HCT116 (cell line): ENCODE measurements at regions of chr12 and their contacts with region 1.

Region 1: DNA sequence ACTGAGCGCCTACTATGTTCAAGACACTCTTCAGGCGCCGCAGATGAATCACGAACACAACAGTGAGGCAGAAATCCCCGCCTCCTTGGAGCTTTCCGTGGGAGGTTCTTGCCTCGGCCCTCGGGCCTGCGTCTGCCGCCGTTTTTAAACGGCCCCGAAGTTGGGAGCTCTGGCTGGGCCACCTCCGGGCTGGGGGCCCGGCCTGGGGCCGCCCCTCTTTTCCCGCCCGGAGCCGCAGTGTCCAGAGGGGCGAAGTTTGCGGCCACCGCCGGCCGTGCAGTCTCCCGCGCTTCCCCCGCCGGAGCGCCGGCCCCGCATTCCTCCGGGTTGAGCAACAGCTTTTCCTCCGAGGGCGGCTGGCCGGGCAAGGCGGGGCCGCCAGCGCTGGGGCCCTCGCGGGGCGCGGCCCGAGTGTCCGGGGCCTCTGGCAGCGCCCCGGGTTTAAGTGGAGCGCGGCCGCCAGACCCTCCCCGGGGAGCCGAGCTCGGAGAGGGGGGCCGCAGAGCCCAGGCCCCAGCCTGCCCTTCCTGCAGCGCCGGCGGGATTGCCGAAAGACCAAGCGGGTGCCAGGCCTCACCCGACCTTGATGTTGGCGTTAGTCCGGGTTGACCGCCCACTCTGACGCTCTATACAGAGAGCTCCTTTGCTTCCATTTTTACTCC is 18.7 kb upstream of the CTDSP2 start:
- DNase-seq: peak; percentile 32
- ATAC-seq: peak; percentile 85
- H3K4me3 ChIP-seq: peak overlapping the region; percentile 42 to 63
- H3K27ac ChIP-seq: peak overlapping the region; percentile 76
- H3K4me1 ChIP-seq: peaks cover 13 to 34% of the 10 kb centered on the region in 2 experiments
- H3K27me3 ChIP-seq: no peaks in the 10 kb centered on the region
- CTCF ChIP-seq: no peak
- POLR2A ChIP-seq: no peak
- RAD21 ChIP-seq: no peak

Region 2: GRCh38 chr12:56884421-56884820 is 980.8 kb before region 1 on chr12:
- CTCF ChIA-PET with region 1: no interaction called
- POLR2A ChIA-PET with region 1: no interaction called
- RAD21 ChIA-PET with region 1: no interaction called
- intact Hi-C with region 1: no loop called
- DNase-seq: no peak
- ATAC-seq: no peak
- H3K4me3 ChIP-seq: no peak overlapping the region
- H3K27ac ChIP-seq: no peak overlapping the region
- H3K4me1 ChIP-seq: no peaks in the 10 kb centered on the region
- H3K27me3 ChIP-seq: no peaks in the 10 kb centered on the region
- CTCF ChIP-seq: no peak
- POLR2A ChIP-seq: no peak
- RAD21 ChIP-seq: no peak

Region 3: GRCh38 chr12:57846577-57847319 is 18.5 kb before region 1 on chr12 and contains the start of gene CTDSP2:
- CTCF ChIA-PET with region 1: interaction called, 5 read pairs
- POLR2A ChIA-PET with region 1: interaction called, 20 read pairs
- RAD21 ChIA-PET with region 1: interaction called in 1 of 2 experiments, 3 read pairs
- intact Hi-C with region 1: loop called (anchors 2 kb)
- DNase-seq: peak; percentile 96
- ATAC-seq: peak; percentile 78
- H3K4me3 ChIP-seq: peak within 1 kb of the TSS; percentile 95 to 97
- H3K27ac ChIP-seq: peak within 1 kb of the TSS; percentile 91
- H3K4me1 ChIP-seq: peaks cover 22 to 43% of the 10 kb centered on the region in 2 experiments
- H3K27me3 ChIP-seq: no peaks in the 10 kb centered on the region
- CTCF ChIP-seq: no peak
- POLR2A ChIP-seq: peak; percentile 61
- RAD21 ChIP-seq: no peak
- total RNA-seq, gene CTDSP2: 82.7 TPM

Region 4: GRCh38 chr12:58074259-58074658 is 209.0 kb after region 1 on chr12:
- CTCF ChIA-PET with region 1: no interaction called
- POLR2A ChIA-PET with region 1: no interaction called
- RAD21 ChIA-PET with region 1: no interaction called
- intact Hi-C with region 1: no loop called
- DNase-seq: no peak
- ATAC-seq: no peak
- H3K4me3 ChIP-seq: no peak overlapping the region
- H3K27ac ChIP-seq: no peak overlapping the region
- H3K4me1 ChIP-seq: no peaks in the 10 kb centered on the region
- H3K27me3 ChIP-seq: no peaks in the 10 kb centered on the region
- CTCF ChIP-seq: no peak
- POLR2A ChIP-seq: no peak
- RAD21 ChIP-seq: no peak

Region 5: DNA sequence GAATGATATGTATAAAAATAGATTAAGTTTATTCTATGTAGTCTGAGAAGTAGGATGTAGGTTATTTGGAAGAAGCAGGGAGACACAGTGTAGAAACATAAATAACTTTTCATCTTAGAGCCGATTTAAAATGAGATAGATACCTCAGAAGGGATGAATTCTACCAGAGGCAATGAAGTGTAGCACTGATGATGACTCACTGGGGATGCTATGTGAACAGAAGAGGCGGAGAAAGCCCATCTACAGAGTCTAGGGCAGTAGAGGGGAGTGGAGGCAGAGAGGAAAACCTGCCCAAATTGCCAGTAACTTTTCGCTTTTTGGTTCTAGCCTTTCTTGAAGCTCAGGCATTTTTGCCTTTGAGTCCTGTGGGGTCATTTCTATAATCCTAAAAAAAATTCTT is 527.9 kb after region 1 on chr12:
- CTCF ChIA-PET with region 1: no interaction called
- POLR2A ChIA-PET with region 1: no interaction called
- RAD21 ChIA-PET with region 1: no interaction called
- intact Hi-C with region 1: no loop called
- DNase-seq: no peak
- ATAC-seq: no peak; the same call in 1 of the 2 replicates
- H3K4me3 ChIP-seq: no peak overlapping the region
- H3K27ac ChIP-seq: no peak overlapping the region
- H3K4me1 ChIP-seq: peaks cover 0 to 17% of the 10 kb centered on the region in 2 experiments; a peak in 2 of 4 replicates
- H3K27me3 ChIP-seq: no peaks in the 10 kb centered on the region
- CTCF ChIP-seq: no peak
- POLR2A ChIP-seq: no peak
- RAD21 ChIP-seq: no peak